ENCODE measurements at regions of chr17 and their contacts with region 1.

Region 1: GRCh38 chr17:48836004-48836403 is 5.2 kb downstream of the CALCOCO2 start:
- DNase-seq: peak; percentile 28
- ATAC-seq: no peak
- H3K4me3 Mint-ChIP-seq: no peak overlapping the region
- H3K27ac Mint-ChIP-seq: no peak overlapping the region
- H3K4me1 Mint-ChIP-seq: peaks cover 77% of the 10 kb centered on the region
- H3K27me3 Mint-ChIP-seq: no peaks in the 10 kb centered on the region
- CTCF ChIP-seq: no peak

Region 2: GRCh38 chr17:48816774-48817590 is 19.0 kb before region 1 on chr17 and contains the start of gene TTLL6:
- CTCF ChIA-PET with region 1: interaction called, 28 read pairs
- POLR2A ChIA-PET with region 1: interaction called, 5 read pairs
- intact Hi-C with region 1: no loop called
- DNase-seq: peak; percentile 76
- ATAC-seq: peak; percentile 94
- H3K4me3 Mint-ChIP-seq: peak within 1 kb of the TSS; percentile 63
- H3K27ac Mint-ChIP-seq: no peak within 1 kb of the TSS
- H3K4me1 Mint-ChIP-seq: peaks cover 18% of the 10 kb centered on the region
- H3K27me3 Mint-ChIP-seq: peaks cover 46% of the 10 kb centered on the region
- CTCF ChIP-seq: no peak
- total RNA-seq, gene TTLL6: not detected

Region 3: GRCh38 chr17:48985436-48986245 is 149.6 kb after region 1 on chr17:
- CTCF ChIA-PET with region 1: no interaction called
- POLR2A ChIA-PET with region 1: no interaction called
- intact Hi-C with region 1: no loop called
- DNase-seq: no peak
- ATAC-seq: no peak
- H3K4me3 Mint-ChIP-seq: no peak overlapping the region
- H3K27ac Mint-ChIP-seq: no peak overlapping the region
- H3K4me1 Mint-ChIP-seq: no peaks in the 10 kb centered on the region
- H3K27me3 Mint-ChIP-seq: peaks cover 20% of the 10 kb centered on the region
- CTCF ChIP-seq: no peak

Measured in activated CD8-positive, alpha-beta T cell treated with anti-CD3 and anti-CD28 coated beads for 36 hours (primary cell).